Posterior vena cava (tissue), 2 donors: ENCODE measurements at regions of chr2 and their contacts with region 1.

Region 1: GRCh38 chr2:235534678-235535422 is 41.0 kb downstream of the AGAP1 start:
- DNase-seq: peak; percentile 68

Region 2: GRCh38 chr2:234081970-234082822 is 1452.7 kb before region 1 on chr2:
- intact Hi-C with region 1: loop called in 1 of 2 experiments (anchors 5 kb)
- DNase-seq: no peak